Lower leg skin (tissue), 4 donors: ENCODE measurements at regions of chr5 and their contacts with region 1.

Region 1: DNA sequence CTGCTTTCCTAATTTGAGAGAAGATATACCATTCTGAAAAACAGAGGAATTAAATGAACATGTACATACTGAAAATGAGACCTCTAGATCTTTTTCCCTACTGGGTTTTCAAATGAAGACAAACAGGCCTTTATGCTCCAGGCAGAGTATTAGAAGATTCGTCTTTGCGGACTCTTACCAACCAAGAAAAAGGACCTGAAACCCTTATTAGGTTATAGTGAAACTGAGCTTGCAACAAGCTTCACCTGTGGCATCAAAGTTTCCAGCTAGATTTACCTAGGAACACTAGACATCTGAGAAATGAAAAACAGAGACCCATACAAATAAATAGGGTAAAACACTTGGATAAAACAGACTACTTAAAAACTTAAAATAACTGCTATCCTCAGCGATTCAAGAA is 46.3 kb downstream of the SMIM15 start:
- DNase-seq: no peak
- H3K4me3 ChIP-seq: no peak overlapping the region
- CTCF ChIP-seq: no peak
- POLR2A ChIP-seq: no peak

Region 2: DNA sequence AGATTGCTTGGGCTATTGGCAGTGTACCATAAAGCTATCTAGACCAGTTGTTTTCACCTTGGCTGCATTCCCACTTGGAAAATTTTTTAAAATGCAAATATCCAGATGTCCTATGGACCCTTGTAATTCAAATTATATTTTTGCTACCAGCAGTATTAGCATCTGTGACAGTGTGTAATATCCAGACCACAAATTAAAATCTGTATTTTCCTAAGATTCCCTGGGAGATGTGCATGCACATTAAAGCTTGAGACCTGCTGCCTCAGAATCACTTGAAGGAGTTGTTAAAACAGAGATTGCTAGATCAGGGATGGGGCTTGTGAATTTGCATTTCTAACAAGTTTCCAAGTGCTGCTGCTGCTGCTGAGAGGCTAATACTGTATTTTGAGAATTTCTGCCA is 841.2 kb before region 1 on chr5:
- intact Hi-C with region 1: no loop called
- DNase-seq: no peak
- H3K4me3 ChIP-seq: no peak overlapping the region
- CTCF ChIP-seq: no peak
- POLR2A ChIP-seq: no peak

Region 3: GRCh38 chr5:61081741-61082140 is 34.2 kb before region 1 on chr5:
- intact Hi-C with region 1: loop called (anchors 2 kb)
- DNase-seq: no peak
- H3K4me3 ChIP-seq: no peak overlapping the region
- CTCF ChIP-seq: no peak
- POLR2A ChIP-seq: no peak